ENCODE measurements at regions of chr17 and their contacts with region 1.

Region 1: GRCh38 chr17:35947156-35947585 is 3.7 kb upstream of the LYZL6 start:
- DNase-seq: peak; percentile 49 to 80 (median 53)
- ATAC-seq: peak; percentile 89
- H3K4me3 ChIP-seq: no peak overlapping the region
- H3K27ac ChIP-seq: no peak overlapping the region
- H3K4me1 ChIP-seq: peaks cover 7 to 14% of the 10 kb centered on the region in 2 experiments; a peak in 3 of 5 replicates
- H3K27me3 ChIP-seq: no peaks in the 10 kb centered on the region
- CTCF ChIP-seq: peak; percentile 83 to 89 (median 88)
- EP300 ChIP-seq: no peak
- POLR2A ChIP-seq: no peak
- RAD21 ChIP-seq: peak; percentile 50 to 75

Region 2: DNA sequence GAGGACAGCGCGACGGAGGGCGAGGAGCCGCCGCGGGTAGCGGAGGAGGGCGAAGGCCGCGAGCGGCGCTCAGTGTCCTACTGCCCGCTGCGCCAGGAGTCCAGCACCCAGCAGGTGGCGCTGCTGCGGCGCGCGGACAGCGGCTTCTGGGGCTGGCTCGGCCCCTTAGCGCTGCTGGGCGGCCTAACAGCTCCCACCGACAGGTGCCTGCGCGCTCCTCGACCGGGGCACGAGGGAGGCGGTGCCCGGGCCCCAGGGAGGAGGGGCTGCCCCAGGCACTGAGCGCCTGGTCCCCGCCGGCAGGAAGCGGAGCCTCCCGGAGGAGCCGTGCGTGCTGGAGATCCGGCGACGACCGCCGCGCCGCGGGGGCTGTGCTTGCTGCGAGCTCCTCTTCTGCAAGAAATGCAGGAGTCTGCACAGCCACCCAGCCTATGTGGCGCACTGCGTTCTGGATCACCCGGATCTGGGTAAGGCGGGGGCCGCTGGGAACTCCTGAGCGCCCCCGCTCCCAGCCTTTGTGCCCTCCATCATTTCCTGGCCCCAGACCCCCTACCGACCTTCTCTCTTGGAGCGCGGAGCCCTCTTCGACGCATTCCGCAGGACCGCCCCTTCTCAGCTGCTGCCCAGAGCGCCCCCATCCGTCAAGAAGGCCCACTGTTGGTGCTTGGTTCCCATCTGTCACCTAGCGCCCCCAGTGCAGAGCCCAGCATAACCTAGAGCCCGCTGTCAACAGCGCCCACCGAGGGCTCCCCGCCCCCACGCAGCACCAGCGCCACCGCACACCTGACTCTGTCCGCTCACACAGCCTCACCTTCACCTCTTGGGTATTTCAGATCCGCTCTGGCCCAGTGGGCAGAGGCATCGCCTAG is 182.8 kb before region 1 on chr17:
- CTCF ChIA-PET with region 1: no interaction called
- POLR2A ChIA-PET with region 1: no interaction called
- in situ Hi-C with region 1: no loop called
- intact Hi-C with region 1: loop called (anchors 10 kb)
- DNase-seq: peak; percentile 91 to 94 (median 92)
- ATAC-seq: peak; percentile 99
- H3K4me3 ChIP-seq: peak overlapping the region; percentile 45
- H3K27ac ChIP-seq: no peak overlapping the region
- H3K4me1 ChIP-seq: peaks cover 0 to 18% of the 10 kb centered on the region in 2 experiments; a peak in 3 of 5 replicates
- H3K27me3 ChIP-seq: peaks cover 32 to 70% of the 10 kb centered on the region in 2 experiments; a peak in 4 of 5 replicates
- CTCF ChIP-seq: peak; percentile 87 to 99 (median 97)
- EP300 ChIP-seq: no peak
- POLR2A ChIP-seq: no peak
- RAD21 ChIP-seq: peak; percentile 79 to 95

Region 3: DNA sequence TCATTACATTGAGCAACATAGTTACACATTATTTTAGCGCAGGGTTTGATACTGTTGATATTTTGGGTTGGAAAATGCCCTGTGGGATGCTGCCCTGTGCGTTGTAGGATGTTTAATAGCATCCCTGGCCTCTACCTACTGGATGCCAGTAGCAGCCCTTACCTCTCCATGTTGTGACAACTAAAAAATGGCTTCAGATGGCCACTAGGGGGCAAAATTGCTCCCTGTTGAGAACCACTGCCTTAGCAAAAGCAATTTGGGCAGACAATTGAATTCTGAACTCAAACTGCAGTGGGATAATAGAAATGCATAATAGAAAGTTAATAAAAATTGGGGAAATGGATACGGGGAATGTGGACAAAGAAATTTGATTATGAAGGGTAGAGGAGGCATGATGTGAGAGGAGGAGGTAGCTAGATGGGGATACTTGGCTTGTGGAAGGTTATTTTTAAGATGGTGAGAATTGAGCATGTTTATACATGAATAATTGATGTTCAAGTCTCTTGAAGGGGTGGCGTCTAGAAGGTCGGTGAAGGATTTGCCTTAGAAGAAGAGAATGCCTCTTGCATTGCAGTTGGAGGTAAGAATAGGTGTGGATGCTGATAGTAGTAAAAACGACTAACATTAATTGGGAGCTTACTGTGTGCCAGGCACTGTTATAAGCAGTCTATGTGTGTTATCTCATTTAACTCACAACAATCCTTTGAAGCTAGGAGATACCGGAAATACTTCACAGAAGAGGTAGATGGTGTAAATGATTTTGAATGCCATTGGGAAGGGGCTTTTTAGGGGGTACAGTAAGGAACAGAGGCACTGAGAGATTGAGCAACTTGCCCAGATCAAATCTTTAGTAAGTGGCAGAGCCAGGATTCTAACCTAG is 97.5 kb before region 1 on chr17:
- CTCF ChIA-PET with region 1: no interaction called
- POLR2A ChIA-PET with region 1: no interaction called
- in situ Hi-C with region 1: no loop called
- intact Hi-C with region 1: loop called (anchors 5 kb)
- DNase-seq: peak; percentile 48 to 82 (median 54)
- ATAC-seq: peak; percentile 92
- H3K4me3 ChIP-seq: no peak overlapping the region
- H3K27ac ChIP-seq: no peak overlapping the region
- H3K4me1 ChIP-seq: no peaks in the 10 kb centered on the region
- H3K27me3 ChIP-seq: no peaks in the 10 kb centered on the region
- CTCF ChIP-seq: peak; percentile 77 to 90 (median 81)
- EP300 ChIP-seq: no peak
- POLR2A ChIP-seq: no peak
- RAD21 ChIP-seq: peak; percentile 54 to 84

Region 4: GRCh38 chr17:35915153-35915969 is 31.8 kb before region 1 on chr17:
- CTCF ChIA-PET with region 1: no interaction called
- POLR2A ChIA-PET with region 1: interaction called, 9 read pairs
- in situ Hi-C with region 1: no loop called
- intact Hi-C with region 1: loop called (anchors 2 kb)
- DNase-seq: no peak
- ATAC-seq: peak; percentile 12; the same call in 2 of the 3 replicates
- H3K4me3 ChIP-seq: no peak overlapping the region
- H3K27ac ChIP-seq: no peak overlapping the region
- H3K4me1 ChIP-seq: peaks cover 36 to 71% of the 10 kb centered on the region in 2 experiments
- H3K27me3 ChIP-seq: no peaks in the 10 kb centered on the region
- CTCF ChIP-seq: no peak
- EP300 ChIP-seq: no peak
- POLR2A ChIP-seq: no peak
- RAD21 ChIP-seq: no peak

Measured in K562 (cell line).